ENCODE measurements at regions of chr9 and their contacts with region 1.

Region 1: GRCh38 chr9:133023117-133023890 is 7.5 kb upstream of the GTF3C5 start:
- DNase-seq: no peak
- H3K4me3 ChIP-seq: no peak overlapping the region
- H3K27ac ChIP-seq: no peak overlapping the region
- H3K27me3 ChIP-seq: no peaks in the 10 kb centered on the region
- CTCF ChIP-seq: no peak

Region 2: GRCh38 chr9:132099741-132100407 is 923.4 kb before region 1 on chr9:
- CTCF ChIA-PET with region 1: no interaction called
- POLR2A ChIA-PET with region 1: no interaction called
- DNase-seq: no peak
- H3K4me3 ChIP-seq: no peak overlapping the region
- H3K27ac ChIP-seq: no peak overlapping the region
- H3K27me3 ChIP-seq: peaks cover 33% of the 10 kb centered on the region
- CTCF ChIP-seq: no peak

Region 3: GRCh38 chr9:132231019-132231701 is 792.1 kb before region 1 on chr9:
- CTCF ChIA-PET with region 1: no interaction called
- POLR2A ChIA-PET with region 1: no interaction called
- DNase-seq: no peak
- H3K4me3 ChIP-seq: no peak overlapping the region
- H3K27ac ChIP-seq: no peak overlapping the region
- H3K27me3 ChIP-seq: peaks cover 47% of the 10 kb centered on the region
- CTCF ChIP-seq: no peak

Region 4: GRCh38 chr9:132944302-132945185 is 78.8 kb before region 1 on chr9 and contains the start of gene TSC1:
- CTCF ChIA-PET with region 1: interaction called, 16 read pairs
- POLR2A ChIA-PET with region 1: no interaction called
- DNase-seq: peak; percentile 90
- H3K4me3 ChIP-seq: peak within 1 kb of the TSS; percentile 93
- H3K27ac ChIP-seq: peak within 1 kb of the TSS; percentile 99
- H3K27me3 ChIP-seq: no peaks in the 10 kb centered on the region
- CTCF ChIP-seq: no peak
- polyA plus RNA-seq, gene TSC1: 67.5 and 87.1 TPM in 2 replicates

Region 5: GRCh38 chr9:133004091-133004998 is 19.0 kb before region 1 on chr9:
- CTCF ChIA-PET with region 1: interaction called, 19 read pairs
- POLR2A ChIA-PET with region 1: no interaction called
- DNase-seq: no peak
- H3K4me3 ChIP-seq: no peak overlapping the region
- H3K27ac ChIP-seq: no peak overlapping the region
- H3K27me3 ChIP-seq: peaks cover 52% of the 10 kb centered on the region
- CTCF ChIP-seq: no peak

Region 6: DNA sequence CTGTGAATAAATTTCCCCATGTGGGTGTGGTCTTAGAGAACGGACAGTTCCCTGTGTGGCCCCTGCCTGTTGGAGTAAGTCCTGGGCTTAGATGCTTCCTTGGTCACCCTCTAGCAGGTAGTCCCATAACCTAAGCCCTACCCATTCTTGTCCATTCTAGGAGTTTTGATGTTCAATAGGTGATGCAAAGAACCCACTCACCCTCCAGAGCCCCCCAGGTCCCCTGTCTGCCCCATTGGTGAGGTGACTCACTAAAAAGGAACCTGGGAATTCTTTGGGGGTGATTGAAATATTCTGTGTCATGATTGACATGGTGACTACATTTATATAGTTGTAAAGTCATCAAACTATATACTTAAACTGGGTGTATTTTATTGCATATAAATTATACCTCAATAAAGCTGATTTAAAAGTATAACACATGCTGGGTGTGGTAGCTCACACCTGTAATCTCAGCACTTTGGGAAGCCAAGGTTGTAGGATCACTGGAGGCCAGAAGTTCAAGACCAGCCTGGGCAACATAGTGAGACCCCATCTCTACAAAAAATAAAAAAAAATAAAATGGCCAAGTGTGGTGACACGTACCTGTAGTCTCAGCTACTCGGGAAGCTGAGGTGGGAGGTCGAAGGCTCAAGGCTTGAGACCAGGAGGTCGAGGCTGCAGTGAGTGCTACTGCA is 13.3 kb before region 1 on chr9:
- CTCF ChIA-PET with region 1: interaction called, 37 read pairs
- POLR2A ChIA-PET with region 1: no interaction called
- DNase-seq: no peak
- H3K4me3 ChIP-seq: no peak overlapping the region
- H3K27ac ChIP-seq: no peak overlapping the region
- H3K27me3 ChIP-seq: peaks cover 10% of the 10 kb centered on the region
- CTCF ChIP-seq: no peak

Region 7: DNA sequence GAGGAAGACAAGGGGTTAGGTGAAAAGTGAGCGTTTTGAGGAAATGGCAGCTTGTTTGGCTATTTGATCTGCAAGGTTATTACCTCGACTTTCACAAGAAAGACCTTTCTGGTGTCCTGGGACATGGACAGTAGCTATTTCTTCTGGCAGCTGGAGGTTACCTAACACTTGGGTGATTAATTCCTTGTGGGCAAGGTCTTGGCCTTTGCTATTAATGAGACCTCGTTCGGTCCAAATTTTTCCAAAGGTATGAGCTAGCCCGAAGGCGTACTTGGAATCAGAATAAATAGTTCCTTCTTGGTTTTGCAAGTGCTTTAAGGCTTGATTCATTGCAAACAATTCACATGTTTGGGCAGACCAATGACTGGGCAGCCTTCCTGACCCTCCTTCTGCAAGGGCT is 12.4 kb after region 1 on chr9:
- CTCF ChIA-PET with region 1: interaction called, 57 read pairs
- POLR2A ChIA-PET with region 1: interaction called, 5 read pairs
- DNase-seq: no peak
- H3K4me3 ChIP-seq: no peak overlapping the region
- H3K27ac ChIP-seq: no peak overlapping the region
- H3K27me3 ChIP-seq: no peaks in the 10 kb centered on the region
- CTCF ChIP-seq: no peak

Region 8: GRCh38 chr9:133054966-133055365 is 31.7 kb after region 1 on chr9:
- CTCF ChIA-PET with region 1: no interaction called
- POLR2A ChIA-PET with region 1: no interaction called
- DNase-seq: no peak
- H3K4me3 ChIP-seq: no peak overlapping the region
- H3K27ac ChIP-seq: no peak overlapping the region
- H3K27me3 ChIP-seq: no peaks in the 10 kb centered on the region
- CTCF ChIP-seq: no peak

Region 9: GRCh38 chr9:133075925-133076630 is 52.8 kb after region 1 on chr9:
- CTCF ChIA-PET with region 1: no interaction called
- POLR2A ChIA-PET with region 1: no interaction called
- DNase-seq: peak; percentile 53
- H3K4me3 ChIP-seq: no peak overlapping the region
- H3K27ac ChIP-seq: no peak overlapping the region
- H3K27me3 ChIP-seq: peaks cover 22% of the 10 kb centered on the region
- CTCF ChIP-seq: no peak

Measured in AG04450 (cell line).